Astrocyte of the cerebellum (primary cell): ENCODE measurements at regions of chr11 and their contacts with region 1.

Region 1: DNA sequence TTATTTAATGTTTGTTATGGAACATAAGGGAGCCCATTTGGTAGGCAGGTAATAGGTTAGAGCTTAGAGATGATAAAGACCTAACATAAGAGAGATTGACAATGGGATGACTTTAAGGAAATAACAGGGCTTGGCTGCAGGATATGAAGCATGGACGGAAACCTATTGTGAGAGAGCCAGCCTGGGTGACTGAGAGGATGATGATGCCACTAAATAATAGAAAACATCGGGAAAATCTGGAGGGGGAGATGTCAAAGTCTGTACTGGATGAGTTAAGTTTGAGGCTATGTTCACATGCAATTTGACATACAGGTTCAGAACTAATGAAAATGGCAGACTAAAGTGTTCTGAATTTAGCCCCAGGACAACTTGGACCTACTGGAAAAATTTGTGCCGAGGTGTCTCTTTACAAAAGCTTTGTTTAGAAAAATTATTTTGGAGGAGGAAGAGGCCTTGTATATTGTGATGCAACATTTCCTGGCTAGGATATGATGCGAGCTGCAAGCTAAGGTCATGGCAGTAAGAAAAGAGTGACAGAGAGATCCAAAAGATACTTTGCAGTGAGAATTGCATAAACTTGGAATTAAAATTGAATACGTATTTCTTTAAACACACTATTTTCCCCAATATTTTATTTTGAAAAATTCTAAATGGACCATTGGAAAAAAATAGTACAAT is 339.3 kb upstream of the PLET1 start:
- DNase-seq: no peak
- H3K4me3 ChIP-seq: no peak overlapping the region
- CTCF ChIP-seq: no peak

Region 2: DNA sequence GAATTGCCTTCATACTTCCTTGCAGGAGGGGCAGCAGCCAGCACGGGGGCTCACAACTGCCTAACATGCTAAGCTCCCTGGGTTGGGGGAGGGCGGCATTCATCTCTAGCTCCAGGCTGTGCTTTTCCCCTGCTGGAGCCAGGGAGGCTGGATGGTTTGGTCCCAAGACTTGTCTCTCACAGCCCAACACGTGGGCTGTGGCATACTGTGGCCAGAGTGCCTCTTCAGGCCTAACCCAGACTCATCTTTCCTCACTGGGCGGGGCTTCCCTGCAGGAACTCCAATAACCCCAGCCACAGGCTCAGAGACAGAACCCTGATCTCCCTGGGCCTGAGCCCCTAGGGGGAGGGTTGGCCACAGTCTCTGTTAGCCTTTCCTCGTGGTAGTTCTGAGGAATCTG is 217.4 kb before region 1 on chr11:
- in situ Hi-C with region 1: no loop called
- DNase-seq: no peak
- H3K4me3 ChIP-seq: no peak overlapping the region
- CTCF ChIP-seq: no peak

Region 3: DNA sequence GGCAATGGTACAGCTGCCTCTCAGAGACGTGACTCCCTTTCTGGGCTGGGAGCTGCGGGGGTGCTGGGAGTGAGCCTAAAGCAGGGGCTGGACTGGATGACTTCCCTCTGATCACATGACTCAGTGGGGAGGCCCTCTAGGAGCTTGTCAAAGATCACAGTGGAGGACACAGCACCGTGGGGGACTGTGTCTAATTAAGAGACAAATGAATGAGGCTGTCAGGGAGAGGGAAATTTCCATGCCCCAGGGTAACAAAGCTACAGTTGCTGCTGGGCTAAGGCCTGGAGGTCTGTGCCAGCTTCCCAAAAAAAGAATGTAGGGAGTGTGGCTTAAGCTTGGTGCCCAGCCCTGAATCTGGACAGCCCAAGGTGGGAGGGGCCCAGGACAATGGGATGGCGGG is 76.5 kb before region 1 on chr11:
- in situ Hi-C with region 1: loop called (anchors 5 kb)
- DNase-seq: peak; percentile 19
- H3K4me3 ChIP-seq: no peak overlapping the region
- CTCF ChIP-seq: no peak

Region 4: GRCh38 chr11:112655371-112655770 is 55.4 kb after region 1 on chr11:
- in situ Hi-C with region 1: no loop called
- DNase-seq: peak; percentile 57
- H3K4me3 ChIP-seq: no peak overlapping the region
- CTCF ChIP-seq: no peak

Region 5: GRCh38 chr11:113113801-113114706 is 514.1 kb after region 1 on chr11:
- in situ Hi-C with region 1: loop called (anchors 5 kb)
- DNase-seq: peak; percentile 20
- H3K4me3 ChIP-seq: no peak overlapping the region
- CTCF ChIP-seq: peak; percentile 94